Cardiac septum (tissue), 1 donor: ENCODE measurements at regions of chr12 and their contacts with region 1.

Region 1: DNA sequence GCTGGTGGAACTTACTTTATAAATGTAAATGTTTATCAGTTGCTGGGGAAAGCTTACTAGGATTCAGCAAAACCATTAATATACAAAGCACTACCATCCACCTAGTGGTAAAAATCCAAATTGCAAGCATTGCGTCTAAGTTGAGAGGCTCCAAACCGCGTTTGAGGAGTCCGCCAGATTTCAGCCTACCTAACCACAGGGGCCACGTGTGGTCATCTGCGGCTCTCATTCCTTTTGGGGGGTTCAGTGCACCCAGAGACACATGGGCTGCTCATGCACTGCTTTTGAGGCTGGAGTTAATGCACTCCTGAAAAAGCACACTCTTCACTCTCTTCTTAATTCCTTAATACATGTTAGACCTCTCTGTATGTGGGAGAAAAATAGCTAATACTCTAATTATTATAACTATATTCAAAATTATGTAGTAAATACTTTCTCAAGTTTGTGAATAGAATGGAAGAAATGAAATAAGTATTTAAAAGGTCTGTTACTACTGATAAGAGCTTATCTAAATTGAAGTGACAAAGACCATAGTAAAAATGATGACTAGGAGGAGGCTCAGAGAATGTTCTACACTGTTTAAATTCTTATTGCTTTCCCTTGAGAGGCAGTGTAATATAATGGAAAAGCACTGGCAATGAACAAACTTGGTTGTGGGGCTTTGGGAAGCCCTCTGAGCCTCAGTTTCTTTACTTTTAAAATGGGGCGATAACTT is 41.4 kb upstream of the MANSC4 start:
- DNase-seq: no peak

Region 2: DNA sequence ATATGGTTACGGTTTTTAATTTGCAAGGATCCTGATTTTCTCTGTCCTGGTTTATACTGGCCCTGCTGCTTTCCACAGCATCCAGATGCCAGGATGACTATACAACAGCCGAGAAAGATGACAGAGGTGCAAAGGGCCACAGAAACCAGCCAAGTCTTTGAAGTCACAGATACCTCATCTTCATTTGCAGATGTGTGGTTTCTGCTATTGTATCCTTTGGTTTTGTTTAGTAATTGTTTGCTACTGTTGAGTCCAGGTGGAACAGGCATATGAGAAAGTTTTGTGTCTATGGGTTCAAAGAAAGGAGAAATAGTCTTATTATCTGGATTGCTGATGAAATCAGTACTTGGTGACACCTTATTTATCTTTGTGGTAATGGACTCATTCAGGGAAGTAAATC is 58.7 kb before region 1 on chr12:
- intact Hi-C with region 1: no loop called
- DNase-seq: no peak

Region 3: GRCh38 chr12:27779920-27780611 is 41.4 kb before region 1 on chr12 and contains the starts of genes KLHL42 and MANSC4:
- intact Hi-C with region 1: loop called (anchors 2 kb)
- DNase-seq: peak; percentile 89
- total RNA-seq, gene KLHL42: 10.3 TPM
- total RNA-seq, gene MANSC4: not detected

Region 4: GRCh38 chr12:28035500-28035899 is 214.1 kb after region 1 on chr12:
- intact Hi-C with region 1: no loop called
- DNase-seq: no peak